Testis (tissue), 5 donors: ENCODE measurements at regions of chr7 and their contacts with region 1.

Region 1: GRCh38 chr7:32942786-32943653 is 14.2 kb upstream of the FKBP9 start:
- DNase-seq: peak; percentile 80
- H3K4me3 ChIP-seq: peak overlapping the region; percentile 70 to 79
- H3K27ac ChIP-seq: peak overlapping the region; percentile 87 to 95
- H3K4me1 ChIP-seq: peaks cover 10% of the 10 kb centered on the region
- H3K27me3 ChIP-seq: no peaks in the 10 kb centered on the region
- CTCF ChIP-seq: peak; percentile 55 to 60 (median 57)
- POLR2A ChIP-seq: no peak

Region 2: GRCh38 chr7:32846701-32847100 is 96.3 kb before region 1 on chr7:
- intact Hi-C with region 1: loop called (anchors 10 kb)
- DNase-seq: peak; percentile 97
- H3K4me3 ChIP-seq: peak overlapping the region in 1 of 2 donors; percentile 3
- H3K27ac ChIP-seq: no peak overlapping the region
- H3K4me1 ChIP-seq: no peaks in the 10 kb centered on the region
- H3K27me3 ChIP-seq: no peaks in the 10 kb centered on the region
- CTCF ChIP-seq: peak; percentile 81 to 90 (median 81)
- POLR2A ChIP-seq: no peak

Region 3: DNA sequence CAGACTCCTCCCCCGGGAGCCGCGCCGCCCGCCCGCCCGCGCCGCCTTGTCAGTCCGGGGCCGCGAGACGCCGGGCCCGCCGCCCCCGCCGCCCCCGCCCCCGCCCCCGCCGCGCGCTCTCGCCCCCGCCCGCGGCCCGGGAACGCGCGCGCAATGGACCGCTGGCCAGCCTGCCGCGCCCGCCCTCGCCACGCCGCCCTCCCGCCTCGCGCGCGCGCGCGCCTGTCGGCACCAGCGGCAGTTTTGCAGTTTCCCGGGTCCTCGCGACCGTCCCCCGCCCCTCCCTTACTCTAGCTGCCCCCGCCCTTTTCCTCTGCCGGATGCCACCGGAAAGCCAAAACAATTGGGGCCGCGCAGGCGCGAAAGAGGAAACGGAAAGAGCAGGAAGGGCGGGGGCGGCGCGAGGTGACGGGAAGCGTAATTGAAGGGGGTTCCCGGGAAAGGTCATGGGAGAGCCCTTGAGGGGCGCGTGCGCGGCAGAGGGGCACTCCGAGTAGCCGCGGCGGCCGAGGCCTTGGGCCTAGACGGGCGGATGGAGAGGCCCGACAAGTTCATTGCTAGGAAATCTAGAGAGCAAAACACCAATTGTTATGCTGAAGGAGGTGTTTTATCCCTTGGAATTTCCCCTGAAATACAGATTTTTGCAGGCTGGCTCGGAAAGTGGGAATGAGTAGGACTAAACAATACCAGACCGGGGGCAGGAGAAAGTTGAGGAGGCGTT is 51.1 kb before region 1 on chr7:
- intact Hi-C with region 1: loop called (anchors 10 kb)
- DNase-seq: peak; percentile 96
- H3K4me3 ChIP-seq: peak overlapping the region; percentile 80 to 98
- H3K27ac ChIP-seq: peak overlapping the region; percentile 90 to 99
- H3K4me1 ChIP-seq: peaks cover 35% of the 10 kb centered on the region
- H3K27me3 ChIP-seq: no peaks in the 10 kb centered on the region
- CTCF ChIP-seq: no peak
- POLR2A ChIP-seq: no peak

Region 4: GRCh38 chr7:34091323-34091917 is 1148.4 kb after region 1 on chr7:
- intact Hi-C with region 1: no loop called
- DNase-seq: peak; percentile 51
- H3K4me3 ChIP-seq: no peak overlapping the region
- H3K27ac ChIP-seq: no peak overlapping the region
- H3K4me1 ChIP-seq: no peaks in the 10 kb centered on the region
- H3K27me3 ChIP-seq: no peaks in the 10 kb centered on the region
- CTCF ChIP-seq: peak; percentile 24 to 48 (median 33)
- POLR2A ChIP-seq: no peak